Stomach (tissue), 19 donors: ENCODE measurements at regions of chr1 and their contacts with region 1.

Region 1: GRCh38 chr1:210584439-210585113 is 255.9 kb downstream of the HHAT start:
- DNase-seq: peak; percentile 77 to 89
- H3K4me3 ChIP-seq: no peak overlapping the region
- H3K27ac ChIP-seq: no peak overlapping the region
- H3K4me1 ChIP-seq: no peaks in the 10 kb centered on the region
- H3K27me3 ChIP-seq: no peaks in the 10 kb centered on the region
- CTCF ChIP-seq: peak in 5 of 7 experiments; percentile 23 to 60 (median 53)
- EP300 ChIP-seq: no peak
- POLR2A ChIP-seq: no peak

Region 2: DNA sequence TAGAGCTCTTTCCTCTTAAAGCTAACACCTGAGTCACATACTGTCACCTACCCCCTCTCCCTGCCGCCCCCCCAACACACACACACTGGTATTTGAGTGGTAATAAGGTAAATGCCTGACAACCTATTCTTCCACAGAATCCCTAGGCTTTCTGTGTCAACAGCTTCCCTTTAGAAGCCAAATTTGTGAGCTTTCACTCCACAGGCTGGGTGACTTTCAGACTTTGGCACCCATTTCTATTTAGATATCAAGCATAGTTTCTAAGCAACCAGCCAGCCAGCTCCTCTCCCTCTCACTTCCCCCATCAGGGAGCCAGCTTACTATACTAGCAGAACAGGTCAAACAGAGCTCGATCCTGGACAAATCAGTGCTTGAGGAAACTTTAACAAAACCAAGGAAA is 797.0 kb before region 1 on chr1:
- intact Hi-C with region 1: no loop called
- DNase-seq: peak; percentile 80 to 90
- H3K4me3 ChIP-seq: no peak overlapping the region
- H3K27ac ChIP-seq: peak overlapping the region; percentile 69 to 93 (median 85)
- H3K4me1 ChIP-seq: peaks cover 41 to 75% (median 65%) of the 10 kb centered on the region in 4 donors
- H3K27me3 ChIP-seq: no peaks in the 10 kb centered on the region
- CTCF ChIP-seq: no peak
- EP300 ChIP-seq: no peak
- POLR2A ChIP-seq: no peak

Region 3: GRCh38 chr1:210726621-210727020 is 142.0 kb after region 1 on chr1:
- intact Hi-C with region 1: no loop called
- DNase-seq: peak in 1 of 2 donors; percentile 70
- H3K4me3 ChIP-seq: no peak overlapping the region
- H3K27ac ChIP-seq: no peak overlapping the region
- H3K4me1 ChIP-seq: no peaks in the 10 kb centered on the region
- H3K27me3 ChIP-seq: no peaks in the 10 kb centered on the region
- CTCF ChIP-seq: no peak
- EP300 ChIP-seq: no peak
- POLR2A ChIP-seq: no peak

Region 4: DNA sequence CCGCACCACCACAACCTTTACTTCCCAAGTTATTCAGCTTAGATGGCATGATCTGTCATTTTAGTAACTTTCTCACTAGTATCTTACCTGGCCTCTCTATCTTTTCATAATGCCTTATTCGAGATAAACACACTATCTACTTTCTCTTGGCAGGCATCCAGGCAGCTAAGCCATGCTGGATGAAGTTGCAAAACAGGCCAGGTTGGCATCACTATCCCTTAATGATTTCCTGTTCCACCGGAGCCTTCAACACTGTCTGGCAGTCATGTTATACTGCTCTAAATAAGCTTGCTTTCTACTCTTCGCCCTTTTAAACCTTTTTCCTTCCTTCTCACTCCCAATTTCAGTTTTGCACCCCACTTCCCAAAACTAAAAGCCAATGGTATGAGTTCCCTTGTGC is 561.4 kb after region 1 on chr1:
- intact Hi-C with region 1: loop called (anchors 10 kb)
- DNase-seq: peak in 1 of 2 donors; percentile 23
- H3K4me3 ChIP-seq: no peak overlapping the region
- H3K27ac ChIP-seq: no peak overlapping the region
- H3K4me1 ChIP-seq: no peaks in the 10 kb centered on the region
- H3K27me3 ChIP-seq: peaks cover 0 to 17% (median 0%) of the 10 kb centered on the region in 3 donors
- CTCF ChIP-seq: no peak
- EP300 ChIP-seq: no peak
- POLR2A ChIP-seq: no peak